ENCODE measurements at regions of chr19 and their contacts with region 1.

Region 1: DNA sequence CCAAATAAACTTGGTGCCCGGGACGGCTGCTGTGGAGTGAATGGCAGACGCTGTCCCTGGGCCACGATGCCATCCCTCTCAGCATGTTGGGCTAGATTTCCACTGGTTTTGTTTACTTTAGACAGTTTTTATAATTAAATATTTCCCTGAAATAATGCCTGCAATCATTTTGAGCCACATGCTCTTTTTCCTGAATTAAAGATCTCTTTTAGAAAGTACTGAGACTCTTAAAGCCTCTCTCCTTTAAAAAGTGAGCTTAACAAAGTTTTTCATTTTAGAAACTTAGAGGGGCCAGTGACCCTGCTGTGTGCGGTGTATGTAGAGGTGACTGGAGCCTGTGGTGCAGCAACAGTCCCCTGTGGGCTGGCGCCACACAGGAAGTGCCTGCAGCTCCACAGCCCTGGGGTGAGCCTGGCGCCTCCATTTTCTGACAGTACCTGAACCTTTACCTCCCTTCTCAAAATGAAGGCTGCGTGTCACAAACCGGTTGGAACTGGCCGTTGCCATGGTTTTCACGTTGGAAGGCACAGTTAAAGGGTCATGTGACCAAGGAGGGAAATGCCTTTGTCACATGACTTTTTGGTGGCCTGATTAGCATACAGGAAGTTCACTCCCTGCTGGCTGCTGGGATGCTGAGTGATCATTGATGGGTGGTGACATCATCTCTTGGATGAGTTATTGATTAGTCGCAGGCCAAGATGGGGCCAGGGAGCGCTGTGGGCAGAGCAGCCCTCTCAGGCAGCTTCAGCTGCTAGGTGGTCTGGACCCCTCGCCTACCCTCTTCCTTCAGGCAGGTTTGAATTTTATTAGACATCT is 26.3 kb downstream of the TSSK6 start:
- ATAC-seq: peak; percentile 75 to 93 (median 89)
- H3K4me3 ChIP-seq: no peak overlapping the region
- H3K27ac ChIP-seq: peak overlapping the region; percentile 89
- H3K4me1 ChIP-seq: peaks cover 47 to 55% of the 10 kb centered on the region in 2 donors

Region 2: GRCh38 chr19:19138169-19138981 is 350.7 kb before region 1 on chr19 and contains the start of gene TMEM161A:
- in situ Hi-C with region 1: loop called in 2 of 9 experiments (anchors 10 to 25 kb)
- ATAC-seq: peak; percentile 98 to 100 (median 100)
- H3K4me3 ChIP-seq: peak within 1 kb of the TSS; percentile 56 to 98 (median 80)
- H3K27ac ChIP-seq: peak within 1 kb of the TSS; percentile 20 to 34
- H3K4me1 ChIP-seq: peaks cover 3 to 5% of the 10 kb centered on the region in 2 donors
- total RNA-seq, gene TMEM161A: 12.7 to 34.7 (median 17.6) TPM

Region 3: DNA sequence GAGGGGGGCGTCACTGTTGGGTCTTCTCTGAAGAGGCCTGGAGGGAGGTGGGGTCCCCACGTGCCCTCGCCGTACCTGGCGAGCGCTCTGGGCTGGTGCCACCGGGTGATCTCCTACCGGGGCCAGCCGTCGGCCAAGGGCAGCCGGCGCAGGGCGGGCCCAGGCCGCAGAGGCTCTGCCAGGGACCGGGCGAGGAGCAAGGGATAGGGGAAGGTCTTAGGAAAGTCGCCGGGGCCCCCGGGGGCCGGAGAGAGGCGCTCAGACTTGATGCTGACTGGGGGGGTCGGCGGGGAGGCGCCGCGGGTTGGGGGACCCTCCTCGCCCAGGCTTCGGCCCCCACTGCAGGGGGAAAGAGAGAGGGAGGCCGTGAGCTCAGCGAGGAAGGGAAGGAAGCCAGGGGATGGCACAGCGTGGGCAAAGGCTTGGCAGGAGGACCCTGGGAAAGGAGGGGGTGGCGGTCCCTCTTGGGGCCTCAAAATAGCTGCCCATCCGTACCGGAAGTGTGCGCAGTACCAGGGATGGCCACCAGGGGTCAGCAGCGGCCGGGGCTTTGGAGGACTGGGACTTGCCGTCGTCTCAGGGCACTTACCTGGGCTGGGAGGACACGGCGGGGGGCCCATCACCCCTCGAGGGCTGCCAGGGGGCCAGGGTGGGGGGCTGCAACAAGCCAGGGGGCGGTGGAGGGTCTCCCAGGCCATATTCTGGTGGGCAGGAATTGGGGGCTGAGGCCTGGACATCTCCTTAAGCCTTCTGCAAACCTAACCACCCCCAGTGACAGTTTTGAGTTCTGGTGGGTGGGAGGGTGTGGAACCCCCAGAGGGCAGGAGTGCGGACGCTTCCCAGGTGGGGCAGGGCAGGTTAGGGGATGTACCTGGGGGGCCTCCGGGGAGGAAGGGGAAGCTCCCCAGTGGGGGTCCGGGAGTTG is 343.1 kb before region 1 on chr19:
- in situ Hi-C with region 1: loop called in 3 of 9 experiments (anchors 10 to 25 kb)
- ATAC-seq: peak; percentile 63 to 93 (median 74)
- H3K4me3 ChIP-seq: no peak overlapping the region
- H3K27ac ChIP-seq: no peak overlapping the region
- H3K4me1 ChIP-seq: no peaks in the 10 kb centered on the region

Region 4: GRCh38 chr19:19170053-19170872 is 318.8 kb before region 1 on chr19 and contains the start of gene MEF2B:
- in situ Hi-C with region 1: loop called in 1 of 9 experiments (anchors 25 kb)
- ATAC-seq: peak; percentile 82 to 98 (median 96)
- H3K4me3 ChIP-seq: peak within 1 kb of the TSS; percentile 12 to 28 (median 18)
- H3K27ac ChIP-seq: no peak within 1 kb of the TSS
- H3K4me1 ChIP-seq: peaks cover 7% of the 10 kb centered on the region in 2 donors
- total RNA-seq, gene MEF2B: 0.20 to 2.5 (median 0.66) TPM in 7 of 8 experiments, not detected in the other

Region 5: GRCh38 chr19:19361075-19361594 is 127.9 kb before region 1 on chr19:
- in situ Hi-C with region 1: loop called in 3 of 9 experiments (anchors 10 to 25 kb)
- ATAC-seq: peak; percentile 85 to 89 (median 86)
- H3K4me3 ChIP-seq: no peak overlapping the region
- H3K27ac ChIP-seq: no peak overlapping the region
- H3K4me1 ChIP-seq: peaks cover 3% of the 10 kb centered on the region in 2 donors

Region 6: GRCh38 chr19:19385108-19385899 is 103.8 kb before region 1 on chr19:
- in situ Hi-C with region 1: loop called in 3 of 9 experiments (anchors 10 to 25 kb)
- ATAC-seq: peak; percentile 92 to 96 (median 94)
- H3K4me3 ChIP-seq: peak overlapping the region; percentile 50 to 79 (median 71)
- H3K27ac ChIP-seq: peak overlapping the region; percentile 62 to 84
- H3K4me1 ChIP-seq: peaks cover 12 to 26% of the 10 kb centered on the region in 2 donors

Region 7: DNA sequence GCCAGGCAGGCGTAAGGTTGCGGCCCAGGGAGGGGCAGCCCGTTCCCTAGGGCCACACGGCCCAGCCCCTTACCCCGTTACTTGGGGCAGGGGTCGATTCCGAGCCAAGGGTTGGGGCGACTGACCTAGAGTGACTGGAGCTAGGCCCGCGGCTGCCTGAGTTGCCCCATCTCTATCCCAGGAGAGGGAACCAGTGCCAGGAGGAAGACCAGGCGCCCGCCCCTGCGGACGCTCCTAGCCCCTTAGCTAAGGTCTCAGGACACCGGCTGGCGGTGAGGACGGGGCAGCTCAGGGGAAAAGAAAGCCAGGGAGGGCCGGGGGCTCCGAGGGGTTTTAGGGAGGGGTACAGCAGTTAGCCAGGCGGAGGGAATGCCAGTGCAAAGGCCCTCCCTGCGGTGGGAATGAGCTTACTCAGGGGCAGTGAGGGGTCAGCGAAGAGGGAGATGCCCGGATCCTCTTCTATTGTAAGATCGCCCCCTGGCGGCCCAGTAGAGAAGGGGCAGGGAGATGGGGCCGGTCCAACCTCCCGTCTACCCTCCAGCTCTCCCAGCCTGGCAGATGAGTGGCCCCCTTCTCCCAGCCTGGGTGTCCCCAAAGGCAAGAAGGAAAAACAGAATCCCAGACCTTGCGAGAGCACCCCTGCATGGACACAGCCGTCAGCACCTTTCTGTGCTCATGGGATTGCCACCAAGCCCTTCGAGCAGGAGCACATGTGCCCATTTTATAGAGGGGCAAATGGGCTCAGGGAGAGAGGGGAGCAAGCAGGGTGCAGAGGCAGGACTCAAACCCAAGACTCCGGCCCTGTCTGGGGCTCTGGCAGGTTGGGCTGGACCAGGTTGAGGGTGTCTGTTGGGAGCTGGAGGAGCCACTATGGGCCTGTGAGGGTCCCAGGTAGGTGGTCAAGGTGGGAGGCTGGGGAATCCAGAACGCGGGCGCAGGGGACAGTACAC is 65.3 kb after region 1 on chr19:
- in situ Hi-C with region 1: no loop called
- ATAC-seq: peak; percentile 33 to 77 (median 42)
- H3K4me3 ChIP-seq: no peak overlapping the region
- H3K27ac ChIP-seq: no peak overlapping the region
- H3K4me1 ChIP-seq: peaks cover 0 to 2% of the 10 kb centered on the region in 2 donors

Measured in motor neuron (in vitro differentiated cells).